Left lung (tissue), 14 donors: ENCODE measurements at regions of chr2 and their contacts with region 1.

Region 1: DNA sequence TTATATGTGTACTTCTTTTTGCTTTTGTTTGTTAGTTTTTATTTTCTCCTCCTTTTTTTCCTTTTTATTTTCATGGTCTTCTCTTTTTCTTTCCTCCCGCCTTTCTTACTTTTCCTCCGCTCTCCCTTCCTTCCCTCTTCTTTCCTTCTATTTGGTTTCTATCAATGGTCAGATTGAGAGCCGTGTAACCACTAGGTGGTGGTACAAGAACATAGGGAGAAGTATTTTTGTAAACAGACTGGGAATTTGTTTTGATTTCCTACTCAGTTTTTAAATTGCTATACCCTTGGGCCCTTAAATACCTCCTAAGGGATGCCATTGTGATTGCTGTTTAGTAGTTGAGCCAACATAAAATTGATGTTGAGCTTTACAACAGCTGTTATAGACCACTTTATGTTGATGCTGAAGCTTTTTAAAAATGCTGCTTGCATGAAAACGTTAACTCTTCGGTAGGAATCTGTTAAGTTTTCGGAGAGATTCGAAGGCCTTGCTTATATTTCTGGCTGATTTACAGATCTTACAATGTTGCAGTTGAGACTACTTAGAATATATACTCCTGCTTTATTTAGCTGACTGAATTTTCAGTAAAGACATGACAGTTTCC is 124.2 kb downstream of the UBE2E3 start:
- DNase-seq: peak in 2 of 4 donors; percentile 31 to 56
- ATAC-seq: peak; percentile 57
- H3K4me3 ChIP-seq: no peak overlapping the region
- H3K27ac ChIP-seq: no peak overlapping the region
- H3K4me1 ChIP-seq: peaks cover 0 to 13% of the 10 kb centered on the region in 2 donors
- H3K27me3 ChIP-seq: no peaks in the 10 kb centered on the region
- CTCF ChIP-seq: peak; percentile 49 to 56

Region 2: GRCh38 chr2:181312515-181312927 is 207.9 kb after region 1 on chr2:
- intact Hi-C with region 1: no loop called
- DNase-seq: no peak
- ATAC-seq: peak; percentile 19
- H3K4me3 ChIP-seq: no peak overlapping the region
- H3K27ac ChIP-seq: peak overlapping the region in 1 of 2 donors; percentile 48
- H3K4me1 ChIP-seq: peaks cover 0 to 35% of the 10 kb centered on the region in 2 donors
- H3K27me3 ChIP-seq: no peaks in the 10 kb centered on the region
- CTCF ChIP-seq: no peak

Region 3: GRCh38 chr2:181457121-181457740 is 352.6 kb after region 1 on chr2 and contains the start of gene ITGA4:
- intact Hi-C with region 1: loop called in 1 of 2 experiments (anchors 10 kb)
- DNase-seq: peak; percentile 57 to 95 (median 73)
- ATAC-seq: peak; percentile 98
- H3K4me3 ChIP-seq: peak within 1 kb of the TSS; percentile 45 to 62
- H3K27ac ChIP-seq: peak within 1 kb of the TSS; percentile 70 to 87
- H3K4me1 ChIP-seq: peaks cover 6 to 58% of the 10 kb centered on the region in 2 donors
- H3K27me3 ChIP-seq: peaks cover 4 to 25% of the 10 kb centered on the region in 2 donors
- CTCF ChIP-seq: peak; percentile 70 to 77
- polyA plus RNA-seq, gene ITGA4: 23.2 to 26.5 (median 25.1) TPM